AG04449 (cell line): ENCODE measurements at regions of chr1 and their contacts with region 1.

Region 1: GRCh38 chr1:22861764-22862440 is 110.8 kb downstream of the LACTBL1 start:
- DNase-seq: peak; percentile 28
- H3K4me3 ChIP-seq: no peak overlapping the region
- CTCF ChIP-seq: peak; percentile 78

Region 2: GRCh38 chr1:22709891-22710700 is 151.8 kb before region 1 on chr1:
- CTCF ChIA-PET with region 1: interaction called, 217 read pairs
- POLR2A ChIA-PET with region 1: no interaction called
- DNase-seq: no peak
- H3K4me3 ChIP-seq: peak overlapping the region; percentile 60
- CTCF ChIP-seq: no peak

Region 3: DNA sequence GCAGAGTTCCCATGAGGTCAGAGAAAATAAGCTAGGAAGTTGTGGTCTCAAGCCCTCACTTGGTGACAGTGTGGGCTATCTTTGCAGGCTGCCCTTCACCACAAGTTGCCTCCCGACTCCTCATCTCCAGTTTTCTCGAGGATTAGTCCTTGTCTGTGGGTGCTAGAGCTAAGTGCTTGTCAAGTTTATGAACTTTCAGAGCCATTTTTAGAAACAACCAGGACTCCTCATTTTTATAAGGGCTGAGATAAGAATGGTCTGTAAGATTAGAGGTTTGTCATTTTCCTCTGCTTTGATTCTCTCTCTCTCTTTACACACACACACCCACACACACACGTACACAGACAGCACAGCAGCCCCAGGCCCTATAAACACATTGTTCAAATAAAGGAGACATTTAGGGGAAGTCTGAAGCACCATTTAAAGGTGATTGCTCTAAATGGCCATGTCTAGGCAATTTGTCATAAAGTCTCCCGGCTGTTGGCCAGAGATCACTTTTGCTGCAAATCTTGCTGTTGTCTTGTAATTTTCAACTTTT is 16.4 kb before region 1 on chr1:
- CTCF ChIA-PET with region 1: interaction called, 86 read pairs
- POLR2A ChIA-PET with region 1: no interaction called
- DNase-seq: no peak
- H3K4me3 ChIP-seq: no peak overlapping the region
- CTCF ChIP-seq: no peak

Region 4: GRCh38 chr1:22883406-22883805 is 21.5 kb after region 1 on chr1:
- CTCF ChIA-PET with region 1: interaction called, 26 read pairs
- POLR2A ChIA-PET with region 1: no interaction called
- DNase-seq: no peak
- H3K4me3 ChIP-seq: no peak overlapping the region
- CTCF ChIP-seq: no peak

Region 5: DNA sequence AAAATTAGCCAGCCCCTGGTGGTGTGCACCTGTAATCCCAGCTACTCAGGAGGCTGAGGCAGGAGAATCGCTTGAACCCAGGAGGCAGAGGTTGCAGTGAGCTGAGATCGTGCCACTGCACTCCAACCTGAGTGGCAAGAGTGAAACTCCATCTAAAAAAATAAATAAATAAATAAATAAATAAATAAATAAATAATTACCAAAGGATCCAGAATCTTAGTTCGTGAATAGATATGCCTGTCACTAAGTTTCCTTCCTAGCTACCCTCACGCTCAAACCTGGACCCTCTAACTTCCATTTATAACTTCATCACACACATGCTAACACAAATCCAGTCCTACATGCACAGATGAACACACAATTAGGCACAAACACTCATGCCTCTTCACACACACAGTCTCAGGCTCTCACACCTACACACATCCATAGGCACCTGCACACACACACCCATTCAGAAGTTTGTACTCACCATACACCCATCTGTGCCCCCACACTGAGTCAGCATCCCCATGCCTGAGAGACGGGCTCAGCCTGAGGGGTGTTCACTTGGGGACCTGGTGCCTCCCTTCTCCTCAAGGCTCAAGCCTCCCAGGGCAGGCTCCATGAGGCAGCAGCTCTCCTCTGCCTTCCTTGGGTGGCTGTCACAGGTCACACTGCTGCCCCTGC is 49.2 kb after region 1 on chr1:
- CTCF ChIA-PET with region 1: no interaction called
- POLR2A ChIA-PET with region 1: no interaction called
- DNase-seq: no peak
- H3K4me3 ChIP-seq: no peak overlapping the region
- CTCF ChIP-seq: no peak

Region 6: DNA sequence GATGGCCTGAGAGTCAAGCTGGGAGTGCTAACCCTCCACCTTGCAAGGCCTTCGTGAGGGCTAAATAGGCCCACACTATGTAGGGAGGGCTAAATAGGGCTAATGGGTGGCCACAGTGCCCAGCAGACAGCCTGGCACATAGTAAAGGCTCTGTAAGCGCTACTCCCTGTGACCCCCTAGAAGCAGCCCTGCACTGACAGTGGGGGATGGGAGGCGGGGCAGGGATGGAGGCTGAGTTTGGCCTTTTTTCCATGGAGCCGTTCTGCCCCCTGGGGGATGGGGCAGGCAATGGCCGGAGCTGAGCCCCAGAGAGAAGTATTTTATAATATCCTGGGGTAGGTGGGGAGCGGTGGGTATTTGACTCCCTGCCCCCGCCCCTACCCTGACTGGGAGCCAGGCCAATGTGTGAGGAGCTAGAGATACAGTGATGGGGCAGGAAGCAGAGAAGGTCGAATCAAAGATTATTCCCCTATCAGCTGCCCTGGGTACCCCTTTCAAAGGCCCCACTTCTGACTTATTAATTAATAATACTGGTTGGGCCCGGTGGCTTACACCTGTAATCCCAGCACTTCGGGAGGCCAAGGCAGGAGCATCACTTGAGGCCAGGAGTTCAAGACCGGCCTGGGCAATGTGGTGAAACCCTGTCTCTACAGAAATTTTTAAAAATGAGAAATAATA is 68.5 kb after region 1 on chr1:
- CTCF ChIA-PET with region 1: interaction called, 10 read pairs
- POLR2A ChIA-PET with region 1: no interaction called
- DNase-seq: no peak
- H3K4me3 ChIP-seq: no peak overlapping the region
- CTCF ChIP-seq: peak; percentile 81

Region 7: GRCh38 chr1:23098463-23099170 is 236.7 kb after region 1 on chr1:
- CTCF ChIA-PET with region 1: no interaction called
- POLR2A ChIA-PET with region 1: no interaction called
- DNase-seq: no peak
- H3K4me3 ChIP-seq: no peak overlapping the region
- CTCF ChIP-seq: peak; percentile 83